ENCODE measurements at regions of chr15 and their contacts with region 1.

Region 1: GRCh38 chr15:64515196-64515595 is 54.8 kb downstream of the ZNF609 start:
- DNase-seq: no peak
- ATAC-seq: no peak
- H3K4me3 ChIP-seq: no peak overlapping the region
- H3K27ac ChIP-seq: no peak overlapping the region
- H3K4me1 ChIP-seq: peaks cover 0 to 16% (median 5%) of the 10 kb centered on the region in 9 donors
- H3K27me3 ChIP-seq: no peaks in the 10 kb centered on the region
- CTCF ChIP-seq: no peak

Region 2: DNA sequence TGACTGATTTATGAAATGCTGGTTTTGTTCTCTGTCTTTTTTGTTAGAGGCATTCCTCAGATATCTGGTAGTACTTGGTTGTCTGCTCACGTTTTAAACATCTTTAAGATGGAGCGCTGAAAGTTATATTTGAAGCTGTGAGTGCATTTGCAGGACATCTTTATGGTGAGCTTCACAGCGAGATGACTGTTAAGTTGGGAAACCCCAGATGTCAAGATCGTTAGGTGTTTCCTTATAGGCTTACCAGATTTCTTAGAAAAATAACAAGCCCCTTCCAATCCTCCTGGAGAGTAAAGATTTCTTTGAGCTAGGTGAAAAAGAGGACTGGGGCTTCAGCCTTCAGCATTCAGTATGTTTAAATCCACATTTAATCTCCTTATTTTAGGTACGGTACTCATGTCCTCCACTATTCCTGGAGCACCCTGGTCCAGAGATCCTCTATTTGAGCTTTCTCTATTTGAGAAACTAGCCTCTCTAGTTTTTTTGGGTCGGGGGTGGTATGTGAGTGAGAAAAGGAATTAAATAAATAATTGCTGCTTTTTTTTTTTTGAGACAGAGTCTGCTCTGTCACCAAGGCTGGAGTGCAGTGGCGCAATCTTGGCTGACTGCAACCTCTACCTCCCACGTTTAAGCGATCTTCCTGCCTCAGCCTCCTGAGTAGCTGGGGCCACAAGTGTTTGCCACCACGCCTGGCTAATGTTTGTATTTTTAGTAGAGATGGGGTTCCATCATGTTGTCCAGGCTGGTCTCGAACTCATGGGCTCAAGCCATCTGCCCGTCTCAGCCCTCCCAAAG is 17.5 kb after region 1 on chr15:
- intact Hi-C with region 1: loop called in 1 of 10 experiments (anchors 1 kb)
- DNase-seq: no peak
- ATAC-seq: no peak
- H3K4me3 ChIP-seq: no peak overlapping the region
- H3K27ac ChIP-seq: no peak overlapping the region
- H3K4me1 ChIP-seq: peaks cover 0 to 38% (median 10%) of the 10 kb centered on the region in 9 donors
- H3K27me3 ChIP-seq: no peaks in the 10 kb centered on the region
- CTCF ChIP-seq: no peak

Region 3: GRCh38 chr15:64571857-64572291 is 56.7 kb after region 1 on chr15:
- intact Hi-C with region 1: loop called in 1 of 10 experiments (anchors 10 kb)
- DNase-seq: no peak
- ATAC-seq: no peak
- H3K4me3 ChIP-seq: no peak overlapping the region
- H3K27ac ChIP-seq: peak overlapping the region in 1 of 10 donors; percentile 44
- H3K4me1 ChIP-seq: peaks cover 0 to 28% (median 4%) of the 10 kb centered on the region in 9 donors
- H3K27me3 ChIP-seq: no peaks in the 10 kb centered on the region
- CTCF ChIP-seq: no peak

Measured in heart right ventricle (tissue), 16 donors.